H1 (cell line): ENCODE measurements at regions of chr20 and their contacts with region 1.

Region 1: DNA sequence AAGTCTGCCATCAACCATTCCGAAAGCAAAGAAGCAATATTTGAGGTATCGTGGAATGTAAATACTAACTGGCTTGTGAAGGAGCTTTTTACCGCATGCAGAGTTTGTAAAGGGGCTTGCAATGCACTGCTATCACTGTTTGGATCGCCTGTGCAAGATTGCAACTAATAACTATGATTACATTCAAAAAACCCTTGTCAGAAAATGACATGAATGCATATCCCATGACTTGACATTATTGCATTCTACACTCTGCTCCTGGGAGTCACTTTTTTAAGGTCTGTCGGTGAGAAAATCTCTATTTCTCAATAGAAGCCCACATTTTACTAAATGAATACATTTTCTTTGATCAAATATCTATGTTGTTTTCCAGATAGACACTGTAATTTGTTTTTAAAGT is 335.4 kb upstream of the SPTLC3 start:
- DNase-seq: no peak
- H3K4me3 ChIP-seq: no peak overlapping the region
- H3K27ac ChIP-seq: no peak overlapping the region
- H3K4me1 ChIP-seq: peaks cover 0 to 2% (median 0%) of the 10 kb centered on the region in 4 experiments; a peak in 1 of 7 replicates
- H3K27me3 ChIP-seq: no peaks in the 10 kb centered on the region
- CTCF ChIP-seq: no peak
- EP300 ChIP-seq: no peak
- POLR2A ChIP-seq: no peak
- RAD21 ChIP-seq: no peak

Region 2: DNA sequence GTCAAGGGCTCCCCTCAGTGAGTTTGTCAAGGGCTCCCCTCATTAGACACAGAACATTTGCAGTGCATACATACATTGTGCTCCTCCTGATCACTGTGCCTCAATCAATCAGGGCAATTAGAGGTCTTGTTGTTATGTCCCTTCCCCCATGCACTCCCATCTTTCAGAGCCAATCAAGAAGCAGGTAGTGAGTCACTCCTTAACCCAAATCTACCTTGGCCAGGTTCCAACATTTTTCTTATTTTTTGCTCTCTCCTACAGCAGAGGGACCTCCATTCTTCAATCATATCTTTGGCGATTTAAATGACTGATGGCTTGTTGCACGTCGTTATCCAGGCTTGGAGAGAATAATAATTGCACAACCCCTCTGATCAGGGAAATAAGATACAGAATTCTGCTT is 74.5 kb before region 1 on chr20:
- CTCF ChIA-PET with region 1: no interaction called
- POLR2A ChIA-PET with region 1: no interaction called
- DNase-seq: no peak
- H3K4me3 ChIP-seq: no peak overlapping the region
- H3K27ac ChIP-seq: no peak overlapping the region
- H3K4me1 ChIP-seq: peaks cover 0 to 5% (median 2%) of the 10 kb centered on the region in 4 experiments; a peak in 2 of 7 replicates
- H3K27me3 ChIP-seq: no peaks in the 10 kb centered on the region
- CTCF ChIP-seq: no peak
- EP300 ChIP-seq: no peak
- POLR2A ChIP-seq: no peak
- RAD21 ChIP-seq: no peak

Region 3: DNA sequence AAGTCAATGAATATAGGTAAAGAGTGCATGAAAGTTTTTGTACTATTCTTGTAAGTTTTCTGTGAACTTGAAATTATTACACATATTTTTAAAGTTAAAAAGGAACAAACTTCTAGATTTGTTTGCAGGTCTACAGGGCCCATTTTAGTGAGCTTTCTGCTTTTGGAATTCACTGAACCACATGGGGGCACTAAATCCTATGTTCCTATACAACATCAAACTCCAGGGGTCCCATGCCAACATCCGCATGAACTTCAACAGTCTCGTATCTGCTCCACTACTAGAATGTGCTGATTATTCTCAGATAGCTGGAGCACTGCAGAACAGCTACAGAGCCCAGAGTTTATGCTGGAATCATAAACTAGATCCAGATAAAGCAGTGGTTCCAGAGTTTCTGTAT is 12.4 kb before region 1 on chr20:
- CTCF ChIA-PET with region 1: interaction called, 13 read pairs
- POLR2A ChIA-PET with region 1: no interaction called
- DNase-seq: peak; percentile 33 to 49
- H3K4me3 ChIP-seq: no peak overlapping the region
- H3K27ac ChIP-seq: no peak overlapping the region
- H3K4me1 ChIP-seq: peaks cover 0 to 4% (median 2%) of the 10 kb centered on the region in 4 experiments; a peak in 3 of 7 replicates
- H3K27me3 ChIP-seq: no peaks in the 10 kb centered on the region
- CTCF ChIP-seq: peak in 2 of 3 experiments; percentile 44 to 46; a peak in 3 of 4 replicates
- EP300 ChIP-seq: no peak
- POLR2A ChIP-seq: no peak
- RAD21 ChIP-seq: peak; percentile 60 to 77